ENCODE measurements at regions of chr2 and their contacts with region 1.

Region 1: GRCh38 chr2:36373149-36373926 is 17.8 kb downstream of the CRIM1 start:
- DNase-seq: no peak

Region 2: GRCh38 chr2:36433311-36434217 is 60.2 kb after region 1 on chr2:
- intact Hi-C with region 1: loop called in 1 of 2 experiments (anchors 5 kb)
- DNase-seq: no peak

Measured in posterior vena cava (tissue), 2 donors.